Body of pancreas (tissue), 4 donors: ENCODE measurements at regions of chr2 and their contacts with region 1.

Region 1: GRCh38 chr2:225889446-225889850 is 489.9 kb downstream of the NYAP2 start:
- DNase-seq: peak in 3 of 4 donors; percentile 5 to 33 (median 18)
- ATAC-seq: peak; percentile 76
- H3K4me3 ChIP-seq: no peak overlapping the region
- H3K27ac ChIP-seq: no peak overlapping the region
- H3K4me1 ChIP-seq: peaks cover 6% of the 10 kb centered on the region
- H3K27me3 ChIP-seq: no peaks in the 10 kb centered on the region
- CTCF ChIP-seq: peak; percentile 57 to 81 (median 76)
- POLR2A ChIP-seq: no peak

Region 2: DNA sequence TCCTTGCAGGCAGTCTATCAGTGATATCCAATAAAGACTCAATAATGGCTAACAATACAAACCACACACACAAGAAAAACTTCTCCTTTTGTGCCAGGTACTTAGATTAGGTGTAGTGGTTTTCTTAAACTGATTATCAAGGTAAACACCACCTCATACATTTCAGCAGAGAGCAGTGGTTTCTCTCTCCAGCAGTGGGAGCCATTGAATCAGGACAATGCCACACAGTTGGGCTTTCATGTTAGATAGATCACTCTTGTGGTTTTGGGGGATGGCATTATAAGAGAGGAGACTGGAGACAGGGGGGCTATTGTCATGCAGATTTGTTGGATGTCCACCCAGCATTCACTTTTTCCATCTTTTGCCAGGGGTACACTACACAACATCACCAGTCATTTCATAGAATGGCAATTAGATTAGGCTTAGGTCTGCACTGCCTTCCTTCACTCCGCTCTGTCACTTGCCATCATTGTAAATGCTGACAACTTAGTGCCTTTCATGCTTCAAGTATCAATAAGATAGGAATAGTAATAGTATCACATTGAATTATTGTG is 923.8 kb after region 1 on chr2:
- intact Hi-C with region 1: loop called (anchors 10 kb)
- DNase-seq: no peak
- ATAC-seq: no peak
- H3K4me3 ChIP-seq: no peak overlapping the region
- H3K27ac ChIP-seq: no peak overlapping the region
- H3K4me1 ChIP-seq: no peaks in the 10 kb centered on the region
- H3K27me3 ChIP-seq: no peaks in the 10 kb centered on the region
- CTCF ChIP-seq: peak in 3 of 7 experiments; percentile 8 to 24 (median 15)
- POLR2A ChIP-seq: no peak

Region 3: DNA sequence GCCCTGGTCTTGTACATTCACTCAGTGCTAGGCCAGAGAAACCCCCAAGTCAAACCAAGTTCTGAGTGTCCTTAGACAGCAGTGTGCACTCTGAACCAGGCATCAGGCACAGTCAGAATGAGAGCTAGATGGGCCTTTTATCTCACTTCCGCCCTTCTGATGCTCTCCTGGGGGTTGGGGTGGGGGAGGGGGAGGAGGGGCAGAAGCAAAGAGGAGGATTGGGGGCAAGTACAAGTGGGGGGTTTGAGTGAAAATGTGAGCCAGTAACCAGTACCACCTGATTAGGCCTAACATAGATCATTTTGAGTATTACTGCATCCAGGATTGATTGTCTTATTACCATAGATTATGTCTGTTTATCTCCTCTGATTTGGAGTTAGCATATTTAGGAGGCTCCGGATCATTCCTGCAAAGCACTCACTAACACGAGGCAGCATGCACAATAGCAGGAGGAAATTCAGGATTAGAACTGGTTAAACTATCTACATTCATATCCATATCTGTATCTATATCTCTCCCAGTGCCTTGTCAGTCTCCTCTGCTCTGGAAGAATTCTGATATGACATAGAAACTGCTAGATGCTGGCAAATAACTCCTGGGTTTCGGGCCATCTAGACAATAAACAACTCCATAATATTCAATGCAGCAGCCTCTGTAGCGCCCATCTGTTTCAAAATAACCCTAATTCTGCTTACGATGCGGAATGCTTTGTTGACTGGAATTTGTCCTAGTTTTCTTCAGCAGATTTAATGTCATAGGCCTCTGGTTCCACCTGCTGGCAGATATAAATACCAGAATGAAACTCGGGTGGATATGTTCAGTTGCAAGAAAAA is 1095.5 kb after region 1 on chr2:
- intact Hi-C with region 1: loop called (anchors 10 kb)
- DNase-seq: peak; percentile 37 to 62 (median 38)
- ATAC-seq: peak; percentile 73
- H3K4me3 ChIP-seq: no peak overlapping the region
- H3K27ac ChIP-seq: no peak overlapping the region
- H3K4me1 ChIP-seq: peaks cover 5% of the 10 kb centered on the region
- H3K27me3 ChIP-seq: no peaks in the 10 kb centered on the region
- CTCF ChIP-seq: peak; percentile 39 to 87 (median 66)
- POLR2A ChIP-seq: no peak